ENCODE measurements at regions of chr17 and their contacts with region 1.

Region 1: DNA sequence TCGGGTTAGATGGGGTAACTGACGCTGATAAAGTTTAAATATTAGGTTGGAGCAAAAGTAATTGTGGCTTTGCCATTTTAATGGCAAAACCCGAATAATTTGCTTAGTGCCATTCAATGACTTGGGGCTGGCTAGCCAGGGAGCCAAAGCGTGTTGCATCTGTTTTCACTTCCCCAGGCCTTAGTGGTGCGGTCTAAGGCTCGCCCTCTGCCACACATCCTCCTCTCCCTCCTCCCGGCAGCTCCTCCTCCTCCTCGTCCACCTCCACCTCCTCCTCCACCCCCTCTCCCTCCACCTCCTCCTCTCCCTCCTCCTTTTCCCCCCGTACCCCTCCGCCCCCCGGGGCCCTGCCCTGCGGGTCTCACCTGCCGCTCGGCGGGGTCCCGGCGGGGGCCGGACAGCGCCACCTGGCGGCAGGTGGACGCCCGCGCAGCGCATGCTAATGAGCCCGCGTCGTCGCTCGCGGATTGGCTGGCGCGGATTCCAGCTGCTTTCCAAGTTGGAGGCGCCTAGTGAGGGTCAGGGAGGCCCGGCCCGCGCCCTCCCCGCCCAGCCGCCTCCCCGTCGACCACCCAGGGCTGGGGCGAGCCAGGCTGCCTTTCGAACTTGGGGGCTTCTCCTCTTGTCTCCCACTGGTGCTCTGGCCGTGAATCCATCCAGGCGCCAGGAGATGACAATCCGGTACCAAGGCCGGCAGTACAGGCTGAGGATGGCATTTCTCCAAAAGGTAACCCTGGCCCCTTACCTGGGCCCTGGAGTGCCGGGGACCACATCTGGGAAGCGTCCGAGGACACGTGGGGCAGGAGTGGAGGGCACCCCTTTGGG is 36.6 kb upstream of the RGS9 start:
- DNase-seq: peak; percentile 61 to 87 (median 79)
- ATAC-seq: peak; percentile 96
- H3K4me3 ChIP-seq: peak overlapping the region; percentile 78
- H3K4me3 Mint-ChIP-seq: peak overlapping the region; percentile 77 to 92 (median 87)
- H3K27ac ChIP-seq: peak overlapping the region; percentile 66
- H3K27ac Mint-ChIP-seq: peak overlapping the region; percentile 62 to 93 (median 81)
- H3K4me1 ChIP-seq: peaks cover 6 to 10% of the 10 kb centered on the region in 2 donors
- H3K4me1 Mint-ChIP-seq: peaks cover 5 to 20% (median 17%) of the 10 kb centered on the region in 7 donors
- H3K27me3 ChIP-seq: no peaks in the 10 kb centered on the region
- H3K27me3 Mint-ChIP-seq: peaks cover 0 to 17% (median 0%) of the 10 kb centered on the region in 5 donors

Region 2: GRCh38 chr17:64781014-64781753 is 319.3 kb before region 1 on chr17:
- CTCF ChIA-PET with region 1: interaction called, 3 read pairs
- POLR2A ChIA-PET with region 1: no interaction called
- intact Hi-C with region 1: loop called in 1 of 2 experiments (anchors 5 kb)
- DNase-seq: peak in 8 of 9 donors; percentile 33 to 59 (median 44)
- ATAC-seq: peak; percentile 51
- H3K4me3 ChIP-seq: peak overlapping the region; percentile 61
- H3K4me3 Mint-ChIP-seq: peak overlapping the region; percentile 66 to 82 (median 78)
- H3K27ac ChIP-seq: peak overlapping the region; percentile 25
- H3K27ac Mint-ChIP-seq: peak overlapping the region in 2 of 9 donors; percentile 32 to 79
- H3K4me1 ChIP-seq: peaks cover 15 to 28% of the 10 kb centered on the region in 2 donors
- H3K4me1 Mint-ChIP-seq: peaks cover 11 to 31% (median 23%) of the 10 kb centered on the region in 7 donors
- H3K27me3 ChIP-seq: no peaks in the 10 kb centered on the region
- H3K27me3 Mint-ChIP-seq: peaks cover 0 to 12% (median 0%) of the 10 kb centered on the region in 5 donors

Region 3: GRCh38 chr17:64975329-64976087 is 125.0 kb before region 1 on chr17:
- CTCF ChIA-PET with region 1: interaction called, 4 read pairs
- POLR2A ChIA-PET with region 1: interaction called, 10 read pairs
- intact Hi-C with region 1: loop called (anchors 1 to 2 kb)
- DNase-seq: peak; percentile 94 to 99 (median 98)
- ATAC-seq: peak; percentile 92
- H3K4me3 ChIP-seq: peak overlapping the region; percentile 82
- H3K4me3 Mint-ChIP-seq: peak overlapping the region; percentile 88 to 100 (median 96)
- H3K27ac ChIP-seq: peak overlapping the region; percentile 99
- H3K27ac Mint-ChIP-seq: peak overlapping the region; percentile 96 to 100 (median 99)
- H3K4me1 ChIP-seq: peaks cover 8 to 27% of the 10 kb centered on the region in 2 donors
- H3K4me1 Mint-ChIP-seq: peaks cover 19 to 50% (median 33%) of the 10 kb centered on the region in 7 donors
- H3K27me3 ChIP-seq: no peaks in the 10 kb centered on the region
- H3K27me3 Mint-ChIP-seq: no peaks in the 10 kb centered on the region

Region 4: GRCh38 chr17:65027305-65027704 is 73.2 kb before region 1 on chr17:
- CTCF ChIA-PET with region 1: no interaction called
- POLR2A ChIA-PET with region 1: no interaction called
- intact Hi-C with region 1: loop called (anchors 1 to 5 kb)
- DNase-seq: peak in 5 of 9 donors; percentile 19 to 68 (median 36)
- ATAC-seq: peak; percentile 82
- H3K4me3 ChIP-seq: no peak overlapping the region
- H3K4me3 Mint-ChIP-seq: peak overlapping the region in 7 of 10 donors; percentile 32 to 73 (median 56)
- H3K27ac ChIP-seq: peak overlapping the region; percentile 8
- H3K27ac Mint-ChIP-seq: peak overlapping the region in 6 of 9 donors; percentile 31 to 85 (median 58)
- H3K4me1 ChIP-seq: peaks cover 49 to 61% of the 10 kb centered on the region in 2 donors
- H3K4me1 Mint-ChIP-seq: peaks cover 54 to 96% (median 86%) of the 10 kb centered on the region in 7 donors
- H3K27me3 ChIP-seq: no peaks in the 10 kb centered on the region
- H3K27me3 Mint-ChIP-seq: no peaks in the 10 kb centered on the region

Region 5: GRCh38 chr17:65122836-65123756 is 22.6 kb after region 1 on chr17:
- CTCF ChIA-PET with region 1: no interaction called
- POLR2A ChIA-PET with region 1: interaction called, 9 read pairs
- intact Hi-C with region 1: loop called (anchors 1 kb)
- DNase-seq: peak; percentile 60 to 91 (median 84)
- ATAC-seq: peak; percentile 98
- H3K4me3 ChIP-seq: peak overlapping the region; percentile 43
- H3K4me3 Mint-ChIP-seq: peak overlapping the region; percentile 74 to 95 (median 92)
- H3K27ac ChIP-seq: peak overlapping the region; percentile 74
- H3K27ac Mint-ChIP-seq: peak overlapping the region; percentile 88 to 99 (median 98)
- H3K4me1 ChIP-seq: peaks cover 0 to 3% of the 10 kb centered on the region in 2 donors
- H3K4me1 Mint-ChIP-seq: peaks cover 9 to 32% (median 10%) of the 10 kb centered on the region in 7 donors
- H3K27me3 ChIP-seq: no peaks in the 10 kb centered on the region
- H3K27me3 Mint-ChIP-seq: peaks cover 0 to 12% (median 4%) of the 10 kb centered on the region in 5 donors

Region 6: GRCh38 chr17:65173284-65173793 is 72.8 kb after region 1 on chr17:
- CTCF ChIA-PET with region 1: no interaction called
- POLR2A ChIA-PET with region 1: no interaction called
- intact Hi-C with region 1: no loop called
- DNase-seq: peak; percentile 16 to 73 (median 60)
- ATAC-seq: peak; percentile 90
- H3K4me3 ChIP-seq: peak overlapping the region; percentile 8
- H3K4me3 Mint-ChIP-seq: peak overlapping the region in 6 of 10 donors; percentile 49 to 63 (median 56)
- H3K27ac ChIP-seq: peak overlapping the region; percentile 9
- H3K27ac Mint-ChIP-seq: peak overlapping the region in 4 of 9 donors; percentile 26 to 74 (median 42)
- H3K4me1 ChIP-seq: peaks cover 13 to 34% of the 10 kb centered on the region in 2 donors
- H3K4me1 Mint-ChIP-seq: peaks cover 0 to 35% (median 11%) of the 10 kb centered on the region in 7 donors
- H3K27me3 ChIP-seq: no peaks in the 10 kb centered on the region
- H3K27me3 Mint-ChIP-seq: peaks cover 0 to 4% (median 0%) of the 10 kb centered on the region in 5 donors

Region 7: GRCh38 chr17:65198653-65199382 is 98.3 kb after region 1 on chr17:
- CTCF ChIA-PET with region 1: no interaction called
- POLR2A ChIA-PET with region 1: no interaction called
- intact Hi-C with region 1: loop called in 1 of 2 experiments (anchors 1 kb)
- DNase-seq: peak in 7 of 9 donors; percentile 36 to 67 (median 57)
- ATAC-seq: peak; percentile 79
- H3K4me3 ChIP-seq: no peak overlapping the region
- H3K4me3 Mint-ChIP-seq: no peak overlapping the region
- H3K27ac ChIP-seq: no peak overlapping the region
- H3K27ac Mint-ChIP-seq: no peak overlapping the region
- H3K4me1 ChIP-seq: no peaks in the 10 kb centered on the region
- H3K4me1 Mint-ChIP-seq: peaks cover 0 to 6% (median 0%) of the 10 kb centered on the region in 7 donors
- H3K27me3 ChIP-seq: no peaks in the 10 kb centered on the region
- H3K27me3 Mint-ChIP-seq: peaks cover 0 to 6% (median 0%) of the 10 kb centered on the region in 5 donors

Region 8: GRCh38 chr17:65219124-65219523 is 118.6 kb after region 1 on chr17:
- CTCF ChIA-PET with region 1: no interaction called
- POLR2A ChIA-PET with region 1: no interaction called
- intact Hi-C with region 1: no loop called
- DNase-seq: no peak
- ATAC-seq: no peak
- H3K4me3 ChIP-seq: no peak overlapping the region
- H3K4me3 Mint-ChIP-seq: no peak overlapping the region
- H3K27ac ChIP-seq: no peak overlapping the region
- H3K27ac Mint-ChIP-seq: no peak overlapping the region
- H3K4me1 ChIP-seq: no peaks in the 10 kb centered on the region
- H3K4me1 Mint-ChIP-seq: peaks cover 0 to 5% (median 0%) of the 10 kb centered on the region in 7 donors
- H3K27me3 ChIP-seq: no peaks in the 10 kb centered on the region
- H3K27me3 Mint-ChIP-seq: peaks cover 9 to 33% (median 17%) of the 10 kb centered on the region in 5 donors

Region 9: GRCh38 chr17:65314212-65314611 is 213.7 kb after region 1 on chr17:
- CTCF ChIA-PET with region 1: no interaction called
- POLR2A ChIA-PET with region 1: no interaction called
- intact Hi-C with region 1: no loop called
- DNase-seq: no peak
- ATAC-seq: no peak
- H3K4me3 ChIP-seq: no peak overlapping the region
- H3K4me3 Mint-ChIP-seq: peak overlapping the region in 1 of 10 donors; percentile 5
- H3K27ac ChIP-seq: no peak overlapping the region
- H3K27ac Mint-ChIP-seq: no peak overlapping the region
- H3K4me1 ChIP-seq: no peaks in the 10 kb centered on the region
- H3K4me1 Mint-ChIP-seq: peaks cover 0 to 7% (median 5%) of the 10 kb centered on the region in 7 donors
- H3K27me3 ChIP-seq: no peaks in the 10 kb centered on the region
- H3K27me3 Mint-ChIP-seq: peaks cover 24 to 50% (median 25%) of the 10 kb centered on the region in 5 donors

Measured in naive thymus-derived CD4-positive, alpha-beta T cell (primary cell).